PC-3 (cell line): ENCODE measurements at regions of chr17 and their contacts with region 1.

Region 1: DNA sequence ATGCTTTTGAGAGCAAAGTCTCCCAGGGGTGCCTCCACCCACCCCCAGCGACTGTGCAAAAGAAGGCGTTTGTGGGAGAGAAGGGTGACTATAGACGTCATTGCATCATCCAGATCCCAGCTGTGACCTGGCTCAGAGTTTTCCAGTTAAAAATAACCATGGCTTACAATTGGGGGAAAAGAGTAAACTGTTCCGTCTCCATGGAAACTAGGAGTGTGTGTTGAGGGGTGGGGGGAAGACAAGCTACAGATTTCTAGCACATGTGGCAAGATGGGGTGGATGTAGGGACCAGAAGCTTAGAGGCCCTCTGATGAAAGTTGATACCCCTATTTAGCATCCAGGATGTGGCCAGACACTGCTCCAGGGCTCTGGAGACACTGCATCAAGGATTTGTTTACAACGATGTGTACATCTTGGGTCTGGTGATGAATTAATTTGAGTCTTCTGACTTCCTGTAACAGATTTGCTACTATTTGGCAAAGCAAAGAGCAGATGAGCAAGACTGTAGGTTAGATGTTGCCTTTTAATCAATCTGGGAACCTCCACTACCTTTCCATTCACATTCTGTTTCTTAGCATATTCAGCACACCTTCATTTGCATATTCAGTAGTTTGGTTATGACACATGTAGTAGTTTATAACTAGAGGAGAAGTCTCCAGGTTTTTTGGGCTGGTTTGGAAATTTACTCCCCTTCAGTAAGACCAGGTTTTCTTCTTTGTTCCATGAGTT is 6.2 kb upstream of the DUSP14 start:
- DNase-seq: no peak
- ATAC-seq: no peak
- H3K4me3 ChIP-seq: no peak overlapping the region
- H3K27ac ChIP-seq: no peak overlapping the region
- H3K4me1 ChIP-seq: peaks cover 18% of the 10 kb centered on the region
- H3K27me3 ChIP-seq: no peaks in the 10 kb centered on the region
- CTCF ChIP-seq: no peak

Region 2: GRCh38 chr17:36534117-36534839 is 949.2 kb before region 1 on chr17:
- CTCF ChIA-PET with region 1: interaction called, 10 read pairs
- POLR2A ChIA-PET with region 1: no interaction called
- intact Hi-C with region 1: no loop called
- DNase-seq: peak; percentile 66
- ATAC-seq: peak; percentile 44
- H3K4me3 ChIP-seq: peak overlapping the region; percentile 81
- H3K27ac ChIP-seq: peak overlapping the region; percentile 93
- H3K4me1 ChIP-seq: peaks cover 34% of the 10 kb centered on the region
- H3K27me3 ChIP-seq: no peaks in the 10 kb centered on the region
- CTCF ChIP-seq: peak; percentile 57